ENCODE measurements at regions of chr2 and their contacts with region 1.

Region 1: DNA sequence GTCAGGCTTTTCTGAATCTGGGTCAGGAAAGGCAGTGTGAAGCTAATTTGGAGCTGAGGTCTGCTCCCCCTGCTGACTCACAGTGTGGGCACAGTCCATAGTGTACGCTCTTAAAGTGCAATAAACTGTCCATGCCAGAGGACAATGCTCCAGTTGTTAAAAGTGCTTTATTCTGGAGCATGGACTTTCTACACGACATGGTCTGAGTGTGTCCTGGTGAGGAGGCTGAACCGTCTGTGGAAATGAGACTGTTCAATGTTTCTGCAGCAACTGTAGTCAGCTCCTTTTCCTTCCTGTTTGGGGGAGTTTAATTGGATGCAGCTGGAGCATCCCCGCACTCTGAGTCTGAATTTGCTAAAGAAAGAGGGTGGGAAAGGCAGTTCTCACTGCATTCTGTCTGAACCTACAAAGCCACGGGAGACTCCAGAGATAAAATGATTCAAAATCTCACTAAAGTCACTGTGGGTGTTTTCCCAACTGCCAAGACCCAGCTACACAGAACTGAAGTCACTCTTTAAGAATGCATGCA is 110.2 kb upstream of the TRIB2 start:
- DNase-seq: no peak
- H3K4me3 Mint-ChIP-seq: no peak overlapping the region
- H3K27ac Mint-ChIP-seq: no peak overlapping the region
- H3K4me1 Mint-ChIP-seq: peaks cover 15% of the 10 kb centered on the region
- H3K27me3 Mint-ChIP-seq: peaks cover 15% of the 10 kb centered on the region

Region 2: GRCh38 chr2:11891028-11891427 is 715.5 kb before region 1 on chr2:
- intact Hi-C with region 1: no loop called
- DNase-seq: no peak
- H3K4me3 Mint-ChIP-seq: no peak overlapping the region
- H3K27ac Mint-ChIP-seq: no peak overlapping the region
- H3K4me1 Mint-ChIP-seq: no peaks in the 10 kb centered on the region
- H3K27me3 Mint-ChIP-seq: no peaks in the 10 kb centered on the region

Region 3: DNA sequence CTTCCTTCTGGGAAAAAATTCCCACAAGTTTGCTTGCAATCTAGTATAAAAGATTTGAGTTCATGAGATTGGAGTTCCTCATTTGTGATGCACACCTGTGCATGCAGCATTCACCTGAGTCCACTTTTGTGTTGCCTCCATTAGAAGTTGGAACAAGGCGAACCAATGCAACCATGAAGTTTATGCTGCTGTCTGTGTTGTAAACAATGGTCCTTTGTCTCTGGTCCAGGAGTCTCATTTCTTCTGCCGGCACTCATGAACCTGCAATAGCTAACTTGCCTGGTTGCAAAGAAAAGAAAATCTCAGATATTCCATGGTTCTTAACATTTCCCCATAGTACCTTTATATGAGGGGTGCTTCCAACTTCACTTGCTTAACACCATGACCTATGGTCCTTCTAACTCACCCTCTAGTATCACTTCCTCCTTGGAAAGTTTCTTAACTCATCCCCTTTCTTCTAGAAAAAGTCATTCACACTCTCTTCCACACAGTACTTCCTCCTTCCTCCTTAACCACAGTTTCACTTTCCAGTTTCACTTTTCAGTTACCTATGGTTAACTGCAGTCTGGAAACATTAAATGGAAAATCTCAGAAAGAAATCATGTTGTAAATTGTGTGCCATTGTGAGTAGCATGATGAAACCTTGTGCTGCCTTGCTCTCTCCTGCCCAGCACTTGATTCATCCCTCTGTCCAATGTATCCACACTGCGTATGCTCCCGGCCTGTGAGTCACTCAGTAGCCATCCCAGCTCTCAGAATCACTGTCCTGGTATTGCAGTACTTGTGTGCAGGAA is 18.6 kb before region 1 on chr2:
- intact Hi-C with region 1: loop called (anchors 2 kb)
- DNase-seq: no peak
- H3K4me3 Mint-ChIP-seq: no peak overlapping the region
- H3K27ac Mint-ChIP-seq: no peak overlapping the region
- H3K4me1 Mint-ChIP-seq: peaks cover 8% of the 10 kb centered on the region
- H3K27me3 Mint-ChIP-seq: peaks cover 7% of the 10 kb centered on the region

Region 4: GRCh38 chr2:12769492-12770105 is 163.1 kb after region 1 on chr2:
- intact Hi-C with region 1: no loop called
- DNase-seq: no peak
- H3K4me3 Mint-ChIP-seq: no peak overlapping the region
- H3K27ac Mint-ChIP-seq: no peak overlapping the region
- H3K4me1 Mint-ChIP-seq: peaks cover 7% of the 10 kb centered on the region
- H3K27me3 Mint-ChIP-seq: peaks cover 19% of the 10 kb centered on the region

Measured in activated T-helper 1 cell treated with anti-CD3 and anti-CD28 coated beads, Interleukin-12 subunit alpha, Interleukin-12 subunit beta, Interleukin-2, Interleukin-4 antibody, amounts not matched to agents 30 ng/mL and 10 ng/mL and 1 ng/mL, durations not matched to agents 14 hours and 24 hours and 36 hours (primary cell).